ENCODE measurements at regions of chr16 and their contacts with region 1.

Region 1: GRCh38 chr16:80982646-80983045 is 24.0 kb downstream of the CMC2 start:
- DNase-seq: no peak
- H3K4me3 Mint-ChIP-seq: no peak overlapping the region
- H3K27ac Mint-ChIP-seq: no peak overlapping the region
- H3K4me1 Mint-ChIP-seq: peaks cover 21% of the 10 kb centered on the region
- H3K27me3 Mint-ChIP-seq: no peaks in the 10 kb centered on the region

Region 2: GRCh38 chr16:80997139-80997798 is 14.6 kb after region 1 on chr16:
- intact Hi-C with region 1: loop called (anchors 2 kb)
- DNase-seq: no peak
- H3K4me3 Mint-ChIP-seq: peak overlapping the region; percentile 75
- H3K27ac Mint-ChIP-seq: peak overlapping the region; percentile 83
- H3K4me1 Mint-ChIP-seq: peaks cover 67% of the 10 kb centered on the region
- H3K27me3 Mint-ChIP-seq: no peaks in the 10 kb centered on the region